ENCODE measurements at regions of chr2 and their contacts with region 1.

Region 1: GRCh38 chr2:97697252-97698235 is 15.8 kb upstream of the ZAP70 start:
- DNase-seq: peak; percentile 88 to 94
- ATAC-seq: peak; percentile 86 to 99 (median 92)
- H3K4me3 ChIP-seq: no peak overlapping the region
- H3K27ac ChIP-seq: no peak overlapping the region
- H3K4me1 ChIP-seq: no peaks in the 10 kb centered on the region
- H3K27me3 ChIP-seq: no peaks in the 10 kb centered on the region
- CTCF ChIP-seq: peak; percentile 98

Region 2: DNA sequence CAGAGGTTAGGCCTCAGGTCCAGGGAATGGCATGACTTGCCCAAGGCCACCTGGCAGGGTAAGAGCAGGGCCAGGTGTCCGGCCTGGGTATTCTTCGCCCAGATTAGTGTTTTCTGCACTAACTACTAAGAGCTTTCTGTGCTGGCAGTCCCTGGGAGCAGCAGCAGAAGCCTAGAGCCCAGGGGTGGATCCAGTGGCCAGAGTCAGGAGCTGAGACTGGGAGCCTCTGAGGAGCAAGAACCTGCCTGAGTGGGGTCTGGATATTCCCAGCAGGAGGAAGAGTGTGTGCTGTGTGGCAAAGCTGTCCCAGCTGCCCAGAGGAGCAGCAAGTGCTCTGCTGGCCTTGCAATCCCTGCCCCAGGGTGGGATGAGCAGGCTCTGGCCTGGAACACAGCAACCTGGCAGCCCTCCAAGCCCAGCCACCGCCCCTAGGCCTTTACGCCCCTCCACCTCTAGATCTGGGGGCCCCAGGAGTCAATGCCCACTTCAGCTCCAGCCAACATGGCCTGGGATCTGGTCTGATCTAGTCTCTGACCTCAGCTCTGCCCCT is 1632.1 kb before region 1 on chr2:
- intact Hi-C with region 1: loop called in 1 of 2 experiments (anchors 10 kb)
- DNase-seq: no peak
- ATAC-seq: no peak
- H3K4me3 ChIP-seq: no peak overlapping the region
- H3K27ac ChIP-seq: no peak overlapping the region
- H3K4me1 ChIP-seq: no peaks in the 10 kb centered on the region
- H3K27me3 ChIP-seq: no peaks in the 10 kb centered on the region
- CTCF ChIP-seq: no peak

Region 3: DNA sequence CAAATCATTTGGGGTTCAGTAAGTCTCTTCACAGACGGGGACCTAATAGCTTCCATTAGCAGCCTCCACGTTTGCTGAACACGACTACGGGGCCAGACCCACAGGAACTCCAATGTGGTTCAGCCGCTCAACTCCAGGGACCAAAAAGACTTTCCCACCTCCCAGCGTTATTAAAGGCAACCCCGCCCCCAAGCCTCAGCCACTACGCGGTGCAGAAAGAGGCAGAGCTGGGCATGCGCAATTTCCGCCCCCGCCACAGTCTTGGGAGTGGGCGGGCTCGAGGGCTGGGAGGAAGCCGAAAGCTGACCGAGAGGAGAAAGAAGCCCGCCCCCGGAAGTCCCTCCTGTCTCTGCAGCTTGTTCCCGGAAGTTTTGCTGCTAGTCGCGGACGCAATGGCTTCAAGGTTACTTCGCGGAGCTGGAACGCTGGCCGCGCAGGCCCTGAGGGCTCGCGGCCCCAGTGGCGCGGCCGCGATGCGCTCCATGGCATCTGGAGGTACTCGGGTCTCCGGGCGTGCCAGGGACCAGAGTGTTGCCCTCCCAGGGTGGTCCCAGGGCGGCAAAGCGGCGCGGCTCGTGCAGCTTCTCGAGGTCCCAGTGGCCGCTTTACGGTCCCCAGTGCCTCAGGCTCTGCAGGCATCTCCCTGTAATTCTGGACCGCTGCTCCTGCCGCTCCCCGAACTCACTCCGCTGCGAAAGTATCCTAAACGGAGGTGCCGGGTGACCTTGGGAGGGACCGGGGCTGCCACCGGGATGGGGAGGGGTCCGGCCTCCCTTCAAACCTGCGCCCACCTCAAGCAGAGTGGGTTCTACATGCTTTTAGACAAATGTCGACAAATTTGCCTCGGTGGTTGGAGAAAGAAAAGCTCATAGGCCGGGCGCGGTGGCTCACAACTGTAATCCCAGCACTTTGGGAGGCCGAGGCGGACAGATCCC is 51.6 kb before region 1 on chr2 and contains the start of gene COX5B:
- intact Hi-C with region 1: loop called in 1 of 2 experiments (anchors 5 kb)
- DNase-seq: peak; percentile 99 to 100
- ATAC-seq: peak; percentile 99
- H3K4me3 ChIP-seq: peak within 1 kb of the TSS; percentile 98
- H3K27ac ChIP-seq: peak within 1 kb of the TSS; percentile 94
- H3K4me1 ChIP-seq: peaks cover 7% of the 10 kb centered on the region
- H3K27me3 ChIP-seq: no peaks in the 10 kb centered on the region
- CTCF ChIP-seq: no peak
- total RNA-seq, gene COX5B: 635 to 891 (median 731) TPM

Region 4: DNA sequence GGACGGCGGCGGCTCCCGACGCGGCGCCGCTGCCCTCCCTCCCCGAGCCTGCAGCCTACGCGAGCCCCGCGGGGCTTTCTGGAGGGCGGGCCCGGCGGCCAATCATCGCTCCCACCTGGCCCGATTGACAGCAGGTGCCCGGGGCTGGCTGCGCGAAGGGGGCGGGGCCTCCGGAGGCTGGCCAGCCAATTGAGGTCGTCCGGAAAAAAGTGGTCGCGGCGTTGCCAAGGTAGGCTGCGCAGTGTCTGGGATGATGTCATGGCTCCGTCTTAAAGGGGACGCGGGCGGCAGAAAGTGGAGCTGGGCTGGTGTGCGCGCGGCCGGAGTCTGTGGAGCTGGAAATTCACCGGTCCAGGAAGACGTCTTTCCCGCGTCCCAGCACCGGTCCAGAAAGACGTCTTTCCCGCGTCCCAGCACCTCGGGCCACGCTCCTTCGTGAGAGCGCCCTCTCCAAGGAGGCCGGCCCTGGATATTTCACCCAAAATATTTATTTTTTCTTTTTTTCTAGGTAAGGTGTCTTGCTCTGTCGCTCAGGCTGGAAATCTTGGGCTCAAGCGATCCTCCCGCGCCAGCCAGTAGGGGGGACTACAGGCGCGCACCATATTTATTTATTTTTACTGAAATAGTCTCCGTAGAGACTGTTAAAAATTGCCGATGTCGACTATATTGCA is 33.4 kb before region 1 on chr2 and contains the start of gene ACTR1B:
- intact Hi-C with region 1: loop called (anchors 2 kb)
- DNase-seq: peak; percentile 97 to 99
- ATAC-seq: peak; percentile 94 to 96 (median 95)
- H3K4me3 ChIP-seq: peak within 1 kb of the TSS; percentile 84
- H3K27ac ChIP-seq: peak within 1 kb of the TSS; percentile 98
- H3K4me1 ChIP-seq: peaks cover 24% of the 10 kb centered on the region
- H3K27me3 ChIP-seq: no peaks in the 10 kb centered on the region
- CTCF ChIP-seq: peak; percentile 58
- total RNA-seq, gene ACTR1B: 46.1 to 65.4 (median 55.5) TPM

Region 5: DNA sequence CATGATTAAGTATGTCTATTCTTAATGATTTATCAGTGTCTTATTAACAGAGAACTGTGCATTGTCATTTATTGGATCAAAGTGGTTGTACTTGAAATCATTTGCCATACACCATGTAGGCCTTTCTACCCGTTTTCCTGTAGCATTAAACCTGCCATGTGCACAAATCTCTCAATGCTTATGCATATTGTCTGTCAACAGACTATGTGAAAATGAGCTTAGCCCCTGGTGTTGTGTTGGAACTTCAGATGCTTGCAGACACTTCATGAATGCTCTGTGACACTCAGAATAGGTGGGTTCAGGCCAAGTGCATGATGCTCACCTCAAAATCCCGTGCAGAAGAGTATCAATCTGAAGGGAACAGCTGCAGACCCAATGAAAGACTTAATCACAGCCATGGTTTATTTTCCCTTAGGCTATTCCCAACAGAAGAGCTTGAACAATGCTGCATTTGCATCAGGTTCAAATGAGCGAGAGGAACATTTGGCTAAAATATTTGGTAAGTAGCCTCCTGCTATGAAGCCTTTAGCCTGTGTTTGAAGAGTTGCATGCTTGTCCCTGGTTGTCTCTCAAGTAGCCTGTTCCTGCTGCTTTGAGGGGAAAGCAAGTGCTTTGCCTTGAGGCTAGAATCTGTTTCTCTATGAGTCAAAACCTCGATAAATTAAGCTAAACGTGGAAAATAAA is 22.0 kb before region 1 on chr2:
- intact Hi-C with region 1: no loop called
- DNase-seq: no peak
- ATAC-seq: no peak
- H3K4me3 ChIP-seq: no peak overlapping the region
- H3K27ac ChIP-seq: no peak overlapping the region
- H3K4me1 ChIP-seq: no peaks in the 10 kb centered on the region
- H3K27me3 ChIP-seq: no peaks in the 10 kb centered on the region
- CTCF ChIP-seq: no peak

Region 6: GRCh38 chr2:98385050-98385699 is 687.6 kb after region 1 on chr2:
- intact Hi-C with region 1: loop called in 1 of 2 experiments (anchors 5 kb)
- DNase-seq: peak; percentile 66 to 86
- ATAC-seq: peak; percentile 83 to 98 (median 90)
- H3K4me3 ChIP-seq: no peak overlapping the region
- H3K27ac ChIP-seq: no peak overlapping the region
- H3K4me1 ChIP-seq: no peaks in the 10 kb centered on the region
- H3K27me3 ChIP-seq: peaks cover 0 to 2% (median 0%) of the 10 kb centered on the region in 3 donors
- CTCF ChIP-seq: peak; percentile 90